Breast epithelium (tissue), 4 donors: ENCODE measurements at regions of chr10 and their contacts with region 1.

Region 1: GRCh38 chr10:124025660-124026588 is 67.5 kb downstream of the CHST15 start:
- DNase-seq: no peak
- H3K4me3 ChIP-seq: no peak overlapping the region
- H3K27ac ChIP-seq: no peak overlapping the region
- H3K4me1 ChIP-seq: no peaks in the 10 kb centered on the region
- H3K27me3 ChIP-seq: no peaks in the 10 kb centered on the region
- CTCF ChIP-seq: peak in 1 of 3 donors; percentile 12
- POLR2A ChIP-seq: no peak

Region 2: DNA sequence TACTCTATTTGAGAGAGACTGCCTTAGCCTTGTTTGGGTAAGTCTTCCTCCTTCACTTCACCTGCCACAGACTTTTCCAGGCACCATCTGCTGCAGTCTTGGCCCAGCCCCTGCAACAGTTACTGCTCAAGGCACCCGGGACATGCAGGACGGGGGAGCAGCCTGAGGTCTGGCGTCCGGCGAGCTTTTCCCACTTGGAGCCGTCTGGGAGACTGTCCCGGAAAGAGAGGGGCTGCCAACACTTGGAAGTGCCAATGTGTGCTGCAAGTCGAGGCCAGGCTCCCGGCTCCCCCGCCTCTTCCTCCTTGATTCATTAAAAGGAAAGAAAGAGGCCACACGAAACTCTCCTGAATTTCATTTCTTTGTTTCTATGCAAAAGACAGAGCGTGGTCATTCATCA is 1550.8 kb before region 1 on chr10:
- intact Hi-C with region 1: no loop called
- DNase-seq: no peak
- H3K4me3 ChIP-seq: peak overlapping the region in 1 of 3 donors; percentile 37
- H3K27ac ChIP-seq: peak overlapping the region; percentile 48 to 68
- H3K4me1 ChIP-seq: peaks cover 0 to 3% of the 10 kb centered on the region in 2 donors
- H3K27me3 ChIP-seq: no peaks in the 10 kb centered on the region
- CTCF ChIP-seq: no peak
- POLR2A ChIP-seq: no peak

Region 3: DNA sequence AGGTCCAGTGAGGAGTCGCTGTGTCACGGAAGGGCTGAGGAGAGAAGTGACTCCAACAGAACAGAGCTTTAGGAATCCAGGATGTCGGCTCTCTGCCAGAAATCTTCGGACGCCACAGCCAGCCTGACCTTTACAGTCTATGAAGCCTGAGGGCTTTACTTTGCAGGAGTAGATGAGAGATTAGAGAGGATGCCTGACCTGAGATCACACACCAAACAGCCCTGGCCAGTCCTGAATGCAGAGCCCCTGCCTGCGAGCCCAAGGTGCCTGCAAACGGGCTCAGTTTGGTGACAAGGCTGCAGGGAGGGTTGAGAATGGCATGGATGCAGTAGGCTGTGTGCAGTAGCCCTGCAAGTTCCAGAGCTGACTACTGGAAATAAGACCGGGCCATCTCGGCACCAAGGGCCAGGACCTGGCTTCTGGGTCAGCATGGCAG is 281.9 kb before region 1 on chr10:
- intact Hi-C with region 1: no loop called
- DNase-seq: peak; percentile 35 to 79
- H3K4me3 ChIP-seq: no peak overlapping the region
- H3K27ac ChIP-seq: no peak overlapping the region
- H3K4me1 ChIP-seq: no peaks in the 10 kb centered on the region
- H3K27me3 ChIP-seq: no peaks in the 10 kb centered on the region
- CTCF ChIP-seq: no peak
- POLR2A ChIP-seq: no peak

Region 4: DNA sequence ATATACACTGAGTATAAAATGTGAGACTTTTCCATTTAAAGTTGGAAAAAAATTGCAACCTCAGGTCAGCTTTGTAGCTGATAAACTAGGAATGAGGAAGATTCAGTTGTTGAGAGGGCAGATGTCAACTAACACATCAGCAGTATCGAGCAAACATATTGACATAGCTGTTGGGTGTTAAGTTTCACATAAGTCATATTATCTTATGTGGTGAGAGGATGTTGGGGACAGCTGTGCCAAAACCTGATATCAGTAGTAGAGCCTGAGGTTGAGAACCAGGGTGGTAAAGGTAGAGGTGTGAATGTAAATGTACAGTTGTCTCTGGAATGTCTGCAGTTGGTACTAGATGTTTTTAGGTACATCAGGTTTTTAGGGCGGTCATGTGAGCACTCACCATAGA is 921.0 kb after region 1 on chr10:
- intact Hi-C with region 1: loop called (anchors 5 kb)
- DNase-seq: no peak
- H3K4me3 ChIP-seq: no peak overlapping the region
- H3K27ac ChIP-seq: no peak overlapping the region
- H3K4me1 ChIP-seq: peaks cover 4 to 6% of the 10 kb centered on the region in 2 donors
- H3K27me3 ChIP-seq: no peaks in the 10 kb centered on the region
- CTCF ChIP-seq: no peak
- POLR2A ChIP-seq: no peak